ENCODE measurements at regions of chr14 and their contacts with region 1.

Region 1: GRCh38 chr14:100979780-100980179 is 76.3 kb upstream of the RTL1 start:
- DNase-seq: peak; percentile 90
- ATAC-seq: peak; percentile 83
- H3K4me3 ChIP-seq: no peak overlapping the region
- H3K27ac ChIP-seq: peak overlapping the region; percentile 66
- H3K4me1 ChIP-seq: peaks cover 60% of the 10 kb centered on the region
- H3K27me3 ChIP-seq: no peaks in the 10 kb centered on the region
- CTCF ChIP-seq: no peak

Region 2: DNA sequence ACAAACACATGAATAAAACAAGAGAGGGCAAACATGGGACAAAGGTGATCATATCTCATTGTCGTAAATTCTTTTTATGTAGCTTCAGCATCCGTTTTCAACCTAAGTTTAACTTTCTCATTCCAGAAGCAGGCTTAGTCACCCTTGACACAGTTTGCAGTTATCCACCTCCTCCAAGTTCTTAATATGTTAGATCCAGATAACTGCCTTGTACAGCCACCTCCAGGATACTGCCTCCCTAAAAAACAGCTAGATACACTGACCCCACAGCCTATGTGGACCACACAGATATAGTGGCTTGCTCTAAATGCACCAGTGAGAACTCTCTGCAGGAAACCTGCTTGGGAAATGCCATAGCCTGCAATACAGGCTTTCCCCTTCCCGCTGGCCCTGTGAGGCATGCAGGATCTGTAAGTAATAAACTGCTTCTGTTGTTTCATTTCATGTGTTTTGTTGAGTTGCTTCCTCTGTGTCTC is 65.2 kb before region 1 on chr14:
- CTCF ChIA-PET with region 1: no interaction called
- POLR2A ChIA-PET with region 1: no interaction called
- intact Hi-C with region 1: loop called (anchors 2 kb)
- DNase-seq: peak; percentile 75
- ATAC-seq: peak; percentile 83
- H3K4me3 ChIP-seq: peak overlapping the region; percentile 13; the same call in 1 of the 2 replicates
- H3K27ac ChIP-seq: peak overlapping the region; percentile 62
- H3K4me1 ChIP-seq: peaks cover 28% of the 10 kb centered on the region
- H3K27me3 ChIP-seq: no peaks in the 10 kb centered on the region
- CTCF ChIP-seq: no peak

Region 3: DNA sequence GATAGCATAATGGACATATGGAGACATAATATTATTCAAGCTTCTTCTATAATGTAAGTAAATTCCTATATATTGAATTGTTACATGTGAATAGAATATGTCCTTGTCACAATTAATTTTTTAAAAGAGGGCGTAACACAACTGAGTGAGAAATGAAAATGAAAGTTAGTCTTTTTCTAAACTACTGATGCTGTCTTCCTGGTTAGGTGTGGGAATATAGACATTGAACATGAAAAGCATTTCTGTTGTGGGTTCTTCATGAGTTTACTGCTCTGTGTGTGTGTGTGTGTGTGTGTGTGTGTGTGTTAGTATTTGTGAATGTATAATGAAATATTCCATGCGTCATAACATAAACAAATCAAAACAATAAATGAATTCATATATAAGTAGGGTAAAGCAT is 35.7 kb before region 1 on chr14:
- CTCF ChIA-PET with region 1: no interaction called
- POLR2A ChIA-PET with region 1: no interaction called
- intact Hi-C with region 1: loop called (anchors 5 kb)
- DNase-seq: no peak
- ATAC-seq: no peak
- H3K4me3 ChIP-seq: no peak overlapping the region
- H3K27ac ChIP-seq: no peak overlapping the region
- H3K4me1 ChIP-seq: no peaks in the 10 kb centered on the region
- H3K27me3 ChIP-seq: no peaks in the 10 kb centered on the region
- CTCF ChIP-seq: no peak

Measured in PC-3 (cell line).